ENCODE measurements at regions of chr9 and their contacts with region 1.

Region 1: DNA sequence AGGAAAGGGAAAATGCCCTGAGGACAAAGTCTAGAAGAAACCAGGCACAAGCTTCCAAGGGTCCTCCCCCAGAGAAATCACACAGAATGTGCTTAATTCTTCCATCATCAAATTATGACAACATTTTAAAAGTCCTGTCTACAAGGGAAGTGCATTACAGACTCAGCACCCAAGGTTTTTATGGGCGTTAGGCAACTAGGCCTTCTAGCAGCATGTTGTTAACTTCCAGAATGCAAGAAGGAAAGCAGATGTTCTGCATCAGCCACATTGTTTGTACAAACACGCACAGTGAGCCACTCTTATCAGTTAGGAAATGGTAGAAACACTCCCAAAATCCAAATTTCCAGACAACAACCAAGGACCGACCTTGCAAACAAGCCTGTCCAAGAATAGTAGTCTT is 26.5 kb downstream of the SMC5 start:
- DNase-seq: peak; percentile 73
- ATAC-seq: peak; percentile 74
- H3K4me3 ChIP-seq: no peak overlapping the region
- H3K27ac ChIP-seq: peak overlapping the region; percentile 81; the same call in 1 of the 2 replicates
- H3K4me1 ChIP-seq: peaks cover 15% of the 10 kb centered on the region
- H3K27me3 ChIP-seq: no peaks in the 10 kb centered on the region
- CTCF ChIP-seq: no peak
- POLR2A ChIP-seq: no peak
- RAD21 ChIP-seq: no peak

Region 2: GRCh38 chr9:69768716-69769115 is 516.5 kb before region 1 on chr9:
- CTCF ChIA-PET with region 1: no interaction called
- POLR2A ChIA-PET with region 1: no interaction called
- dilution Hi-C with region 1: no loop called
- in situ Hi-C with region 1: no loop called
- intact Hi-C with region 1: no loop called
- DNase-seq: peak; percentile 34
- ATAC-seq: peak; percentile 59
- H3K4me3 ChIP-seq: no peak overlapping the region
- H3K27ac ChIP-seq: no peak overlapping the region; the same call in 1 of the 2 replicates
- H3K4me1 ChIP-seq: peaks cover 5% of the 10 kb centered on the region; the same call in 1 of the 2 replicates
- H3K27me3 ChIP-seq: no peaks in the 10 kb centered on the region
- CTCF ChIP-seq: no peak
- POLR2A ChIP-seq: no peak
- RAD21 ChIP-seq: no peak

Region 3: GRCh38 chr9:70229579-70229978 is 55.7 kb before region 1 on chr9:
- CTCF ChIA-PET with region 1: no interaction called
- POLR2A ChIA-PET with region 1: no interaction called
- dilution Hi-C with region 1: no loop called
- in situ Hi-C with region 1: no loop called
- intact Hi-C with region 1: no loop called
- DNase-seq: peak; percentile 68
- ATAC-seq: peak; percentile 88
- H3K4me3 ChIP-seq: no peak overlapping the region
- H3K27ac ChIP-seq: no peak overlapping the region
- H3K4me1 ChIP-seq: peaks cover 7% of the 10 kb centered on the region
- H3K27me3 ChIP-seq: no peaks in the 10 kb centered on the region
- CTCF ChIP-seq: peak; percentile 65
- POLR2A ChIP-seq: no peak
- RAD21 ChIP-seq: peak; percentile 80

Region 4: GRCh38 chr9:70258692-70259511 is 26.3 kb before region 1 on chr9 and contains the start of gene SMC5:
- CTCF ChIA-PET with region 1: no interaction called
- POLR2A ChIA-PET with region 1: interaction called, 3 read pairs
- dilution Hi-C with region 1: no loop called
- in situ Hi-C with region 1: no loop called
- intact Hi-C with region 1: loop called (anchors 2 kb)
- DNase-seq: peak; percentile 92
- ATAC-seq: peak; percentile 84
- H3K4me3 ChIP-seq: peak within 1 kb of the TSS; percentile 75
- H3K27ac ChIP-seq: peak within 1 kb of the TSS; percentile 97
- H3K4me1 ChIP-seq: peaks cover 26% of the 10 kb centered on the region
- H3K27me3 ChIP-seq: no peaks in the 10 kb centered on the region
- CTCF ChIP-seq: no peak
- POLR2A ChIP-seq: peak; percentile 96
- RAD21 ChIP-seq: no peak
- total RNA-seq, gene SMC5: 12.0 and 25.8 TPM in 2 replicates

Region 5: DNA sequence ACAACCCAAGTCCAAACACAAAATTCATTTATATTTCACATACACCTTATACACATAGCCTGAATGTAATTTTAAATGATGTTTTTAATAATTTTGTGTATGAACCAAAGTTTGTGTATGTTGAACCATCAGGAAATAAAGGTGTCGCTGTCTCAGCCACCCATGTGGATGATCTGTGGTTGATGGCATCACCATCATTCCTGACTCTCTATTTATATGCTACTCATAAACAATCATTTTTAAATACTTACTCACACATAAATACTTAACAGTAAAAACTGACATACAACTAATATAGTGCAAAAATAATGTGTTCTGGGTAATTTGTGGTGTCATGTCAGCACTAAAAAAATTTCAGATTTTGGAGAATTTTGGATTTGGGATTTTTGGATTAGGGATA is 11.9 kb after region 1 on chr9:
- CTCF ChIA-PET with region 1: interaction called, 3 read pairs
- POLR2A ChIA-PET with region 1: no interaction called
- dilution Hi-C with region 1: no loop called
- in situ Hi-C with region 1: no loop called
- intact Hi-C with region 1: loop called (anchors 1 kb)
- DNase-seq: peak; percentile 62
- ATAC-seq: peak; percentile 85
- H3K4me3 ChIP-seq: no peak overlapping the region
- H3K27ac ChIP-seq: no peak overlapping the region; the same call in 1 of the 2 replicates
- H3K4me1 ChIP-seq: peaks cover 2% of the 10 kb centered on the region; the same call in 1 of the 2 replicates
- H3K27me3 ChIP-seq: no peaks in the 10 kb centered on the region
- CTCF ChIP-seq: no peak
- POLR2A ChIP-seq: no peak
- RAD21 ChIP-seq: no peak

Region 6: GRCh38 chr9:70494221-70494620 is 209.0 kb after region 1 on chr9:
- CTCF ChIA-PET with region 1: no interaction called
- POLR2A ChIA-PET with region 1: no interaction called
- dilution Hi-C with region 1: no loop called
- in situ Hi-C with region 1: no loop called
- intact Hi-C with region 1: no loop called
- DNase-seq: no peak
- ATAC-seq: no peak
- H3K4me3 ChIP-seq: no peak overlapping the region
- H3K27ac ChIP-seq: no peak overlapping the region
- H3K4me1 ChIP-seq: 0 out of 2 replicates have a peak, but pooled peaks cover 2% of the 10 kb centered on the region
- H3K27me3 ChIP-seq: no peaks in the 10 kb centered on the region
- CTCF ChIP-seq: no peak
- POLR2A ChIP-seq: no peak
- RAD21 ChIP-seq: no peak

Region 7: GRCh38 chr9:70696694-70697335 is 411.6 kb after region 1 on chr9:
- CTCF ChIA-PET with region 1: no interaction called
- POLR2A ChIA-PET with region 1: no interaction called
- dilution Hi-C with region 1: no loop called
- in situ Hi-C with region 1: no loop called
- intact Hi-C with region 1: no loop called
- DNase-seq: no peak
- ATAC-seq: no peak
- H3K4me3 ChIP-seq: no peak overlapping the region
- H3K27ac ChIP-seq: no peak overlapping the region
- H3K4me1 ChIP-seq: no peaks in the 10 kb centered on the region
- H3K27me3 ChIP-seq: no peaks in the 10 kb centered on the region
- CTCF ChIP-seq: no peak
- POLR2A ChIP-seq: no peak
- RAD21 ChIP-seq: no peak

Measured in IMR-90 (cell line).